Natural killer cell (primary cell): ENCODE measurements at regions of chr10 and their contacts with region 1.

Region 1: GRCh38 chr10:124719213-124719851 is 24.8 kb downstream of the FAM53B start:
- DNase-seq: peak; percentile 56 to 91
- ATAC-seq: peak; percentile 34 to 60 (median 41)
- H3K4me3 ChIP-seq: no peak overlapping the region
- H3K4me3 Mint-ChIP-seq: peak overlapping the region; percentile 65
- H3K27ac ChIP-seq: peak overlapping the region; percentile 91
- H3K27ac Mint-ChIP-seq: peak overlapping the region; percentile 99
- H3K4me1 ChIP-seq: peaks cover 91% of the 10 kb centered on the region
- H3K4me1 Mint-ChIP-seq: peaks cover 92 to 97% of the 10 kb centered on the region in 2 donors
- H3K27me3 ChIP-seq: no peaks in the 10 kb centered on the region
- H3K27me3 Mint-ChIP-seq: no peaks in the 10 kb centered on the region
- CTCF ChIP-seq: peak; percentile 62

Region 2: DNA sequence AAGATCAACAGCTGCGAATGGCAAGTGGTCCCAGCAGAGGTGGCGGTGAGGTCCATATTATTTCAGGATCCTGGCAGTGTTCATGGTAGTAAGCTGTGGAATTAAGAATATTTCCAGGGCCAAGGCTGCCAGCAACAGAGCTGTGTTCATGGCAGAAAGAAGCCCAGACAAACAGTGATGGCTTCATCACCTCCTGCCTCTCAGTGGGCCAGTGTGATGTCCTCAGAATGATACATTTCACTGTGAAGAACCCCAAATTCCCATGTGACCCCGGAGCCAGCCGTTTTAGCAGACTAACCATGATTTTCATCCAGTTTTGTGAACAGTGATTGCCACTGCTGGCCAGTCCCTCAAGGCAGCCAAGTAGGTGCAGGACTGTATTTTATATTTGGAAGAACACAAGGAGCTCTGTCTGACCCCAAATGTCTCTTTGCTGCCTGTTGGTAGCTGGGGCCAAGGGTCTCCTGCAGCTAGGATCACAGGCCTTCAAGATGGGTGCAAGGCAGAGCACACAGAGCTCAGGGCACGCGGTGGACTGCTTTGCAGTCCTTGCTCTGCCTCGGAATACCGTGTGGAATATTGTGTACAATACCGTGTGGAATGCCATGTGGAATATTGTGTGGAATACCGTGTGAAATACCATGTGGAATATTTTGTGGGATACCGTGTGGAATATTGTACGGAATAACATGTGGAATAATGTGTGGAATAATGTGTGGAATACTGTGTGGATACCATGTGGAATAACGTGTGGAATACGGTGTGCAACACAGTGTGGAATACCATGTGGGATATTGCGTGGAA is 493.7 kb before region 1 on chr10:
- intact Hi-C with region 1: loop called (anchors 5 kb)
- DNase-seq: peak; percentile 52
- ATAC-seq: peak; percentile 37 to 52 (median 47)
- H3K4me3 ChIP-seq: no peak overlapping the region
- H3K4me3 Mint-ChIP-seq: peak overlapping the region; percentile 81
- H3K27ac ChIP-seq: no peak overlapping the region
- H3K27ac Mint-ChIP-seq: peak overlapping the region; percentile 90 to 94
- H3K4me1 ChIP-seq: peaks cover 20% of the 10 kb centered on the region
- H3K4me1 Mint-ChIP-seq: peaks cover 35 to 47% of the 10 kb centered on the region in 2 donors
- H3K27me3 ChIP-seq: no peaks in the 10 kb centered on the region
- H3K27me3 Mint-ChIP-seq: peaks cover 0 to 2% of the 10 kb centered on the region in 2 donors
- CTCF ChIP-seq: no peak

Region 3: GRCh38 chr10:124641282-124642087 is 77.8 kb before region 1 on chr10:
- intact Hi-C with region 1: loop called (anchors 2 kb)
- DNase-seq: peak; percentile 54 to 77
- ATAC-seq: peak; percentile 64 to 84 (median 75)
- H3K4me3 ChIP-seq: no peak overlapping the region
- H3K4me3 Mint-ChIP-seq: peak overlapping the region; percentile 77
- H3K27ac ChIP-seq: peak overlapping the region; percentile 92
- H3K27ac Mint-ChIP-seq: peak overlapping the region; percentile 96 to 99
- H3K4me1 ChIP-seq: peaks cover 98% of the 10 kb centered on the region
- H3K4me1 Mint-ChIP-seq: peaks cover 53 to 91% of the 10 kb centered on the region in 2 donors
- H3K27me3 ChIP-seq: no peaks in the 10 kb centered on the region
- H3K27me3 Mint-ChIP-seq: no peaks in the 10 kb centered on the region
- CTCF ChIP-seq: no peak

Region 4: GRCh38 chr10:124688889-124689670 is 30.3 kb before region 1 on chr10:
- intact Hi-C with region 1: loop called (anchors 1 kb)
- DNase-seq: peak; percentile 67 to 84
- ATAC-seq: peak; percentile 83 to 98 (median 95)
- H3K4me3 ChIP-seq: no peak overlapping the region
- H3K4me3 Mint-ChIP-seq: peak overlapping the region; percentile 81
- H3K27ac ChIP-seq: peak overlapping the region; percentile 67
- H3K27ac Mint-ChIP-seq: peak overlapping the region; percentile 91 to 98
- H3K4me1 ChIP-seq: peaks cover 94% of the 10 kb centered on the region
- H3K4me1 Mint-ChIP-seq: peaks cover 75 to 84% of the 10 kb centered on the region in 2 donors
- H3K27me3 ChIP-seq: no peaks in the 10 kb centered on the region
- H3K27me3 Mint-ChIP-seq: no peaks in the 10 kb centered on the region
- CTCF ChIP-seq: no peak

Region 5: DNA sequence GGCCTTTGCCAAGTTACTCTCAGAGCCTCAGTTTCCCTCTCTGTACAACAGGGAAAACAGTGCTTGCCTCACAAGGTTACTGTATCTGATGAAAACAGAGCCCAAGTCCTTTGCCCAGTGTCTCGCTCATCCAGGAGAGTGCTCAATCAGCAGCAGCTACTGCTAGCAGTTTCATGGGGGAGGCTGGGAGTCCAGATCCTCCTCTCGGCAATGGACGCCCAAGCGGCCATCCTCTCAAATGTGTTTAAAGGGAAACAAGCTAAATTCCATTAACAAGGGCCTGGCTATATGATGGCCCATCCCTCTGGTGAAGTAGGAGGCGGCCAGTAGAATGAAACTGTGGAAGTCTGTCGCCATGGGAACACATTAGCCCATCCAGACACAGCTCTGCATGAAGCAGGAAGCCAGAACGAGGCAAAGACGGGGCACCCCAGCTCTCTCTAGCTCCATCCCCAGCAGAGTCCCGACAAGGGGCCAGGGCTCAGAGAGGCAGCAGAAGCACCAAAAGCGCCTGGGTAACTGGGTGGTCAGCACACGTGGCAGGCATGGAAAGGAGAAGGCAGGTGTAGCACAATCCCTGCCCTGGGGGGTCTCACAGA is 10.3 kb before region 1 on chr10:
- intact Hi-C with region 1: loop called (anchors 1 kb)
- DNase-seq: peak in 1 of 2 donors; percentile 50
- ATAC-seq: peak in 1 of 3 donors; percentile 32
- H3K4me3 ChIP-seq: no peak overlapping the region
- H3K4me3 Mint-ChIP-seq: peak overlapping the region; percentile 17
- H3K27ac ChIP-seq: peak overlapping the region; percentile 51
- H3K27ac Mint-ChIP-seq: peak overlapping the region; percentile 89 to 95
- H3K4me1 ChIP-seq: peaks cover 87% of the 10 kb centered on the region
- H3K4me1 Mint-ChIP-seq: peaks cover 82 to 86% of the 10 kb centered on the region in 2 donors
- H3K27me3 ChIP-seq: no peaks in the 10 kb centered on the region
- H3K27me3 Mint-ChIP-seq: no peaks in the 10 kb centered on the region
- CTCF ChIP-seq: no peak